ENCODE measurements at regions of chr19 and their contacts with region 1.

Region 1: GRCh38 chr19:47428177-47428894 is 9.0 kb upstream of the MEIS3 start:
- DNase-seq: peak; percentile 56 to 94 (median 74)
- ATAC-seq: peak; percentile 86
- H3K4me3 ChIP-seq: peak overlapping the region in 1 of 2 experiments; percentile 2
- H3K4me3 Mint-ChIP-seq: no peak overlapping the region
- H3K27ac ChIP-seq: no peak overlapping the region
- H3K27ac Mint-ChIP-seq: no peak overlapping the region
- H3K4me1 ChIP-seq: peaks cover 33% of the 10 kb centered on the region
- H3K4me1 Mint-ChIP-seq: peaks cover 12% of the 10 kb centered on the region
- H3K27me3 ChIP-seq: peaks cover 20 to 34% of the 10 kb centered on the region in 2 experiments
- H3K27me3 Mint-ChIP-seq: peaks cover 56% of the 10 kb centered on the region
- CTCF ChIP-seq: no peak

Region 2: GRCh38 chr19:47296036-47296435 is 132.3 kb before region 1 on chr19:
- CTCF ChIA-PET with region 1: interaction called, 15 read pairs
- POLR2A ChIA-PET with region 1: no interaction called
- intact Hi-C with region 1: loop called (anchors 1 kb)
- DNase-seq: peak; percentile 41 to 87 (median 76)
- ATAC-seq: peak; percentile 91
- H3K4me3 ChIP-seq: no peak overlapping the region
- H3K4me3 Mint-ChIP-seq: no peak overlapping the region
- H3K27ac ChIP-seq: no peak overlapping the region
- H3K27ac Mint-ChIP-seq: no peak overlapping the region
- H3K4me1 ChIP-seq: no peaks in the 10 kb centered on the region
- H3K4me1 Mint-ChIP-seq: peaks cover 3% of the 10 kb centered on the region
- H3K27me3 ChIP-seq: no peaks in the 10 kb centered on the region
- H3K27me3 Mint-ChIP-seq: no peaks in the 10 kb centered on the region
- CTCF ChIP-seq: peak; percentile 68

Measured in CD8-positive, alpha-beta T cell (primary cell).